ENCODE measurements at regions of chr13 and their contacts with region 1.

Region 1: DNA sequence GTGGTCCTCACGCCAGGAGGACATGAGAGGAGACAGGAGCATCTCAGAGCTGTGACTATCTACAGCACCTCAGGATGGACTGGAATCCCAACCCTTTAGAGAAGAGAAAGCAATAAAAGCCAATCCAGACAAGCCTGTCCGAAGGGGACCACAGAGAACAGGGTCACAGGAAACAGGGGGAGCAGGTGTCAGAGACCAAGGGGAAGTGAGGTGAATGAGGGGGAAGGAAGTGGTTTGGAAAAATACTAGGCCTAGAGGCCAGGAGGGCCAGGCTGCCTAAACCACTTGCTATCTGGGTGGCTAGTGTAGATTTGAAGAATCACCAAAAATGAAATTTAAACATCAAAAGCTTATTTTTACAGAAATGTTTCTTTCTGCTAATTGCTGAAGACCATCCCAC is 16.2 kb downstream of the TMTC4 start:
- DNase-seq: no peak
- ATAC-seq: peak; percentile 54
- H3K4me3 ChIP-seq: no peak overlapping the region
- H3K4me3 Mint-ChIP-seq: peak overlapping the region in 5 of 10 donors; percentile 23 to 54 (median 44)
- H3K27ac ChIP-seq: no peak overlapping the region
- H3K27ac Mint-ChIP-seq: peak overlapping the region in 5 of 9 donors; percentile 17 to 68 (median 40)
- H3K4me1 ChIP-seq: peaks cover 4 to 16% of the 10 kb centered on the region in 2 donors
- H3K4me1 Mint-ChIP-seq: peaks cover 12 to 45% (median 19%) of the 10 kb centered on the region in 7 donors
- H3K27me3 ChIP-seq: no peaks in the 10 kb centered on the region
- H3K27me3 Mint-ChIP-seq: no peaks in the 10 kb centered on the region

Region 2: GRCh38 chr13:99656092-99656745 is 1002.1 kb before region 1 on chr13:
- CTCF ChIA-PET with region 1: no interaction called
- POLR2A ChIA-PET with region 1: no interaction called
- intact Hi-C with region 1: no loop called
- DNase-seq: peak; percentile 58 to 84 (median 80)
- ATAC-seq: peak; percentile 89
- H3K4me3 ChIP-seq: peak overlapping the region; percentile 47
- H3K4me3 Mint-ChIP-seq: peak overlapping the region; percentile 73 to 90 (median 81)
- H3K27ac ChIP-seq: peak overlapping the region; percentile 82
- H3K27ac Mint-ChIP-seq: peak overlapping the region; percentile 47 to 98 (median 92)
- H3K4me1 ChIP-seq: peaks cover 39 to 41% of the 10 kb centered on the region in 2 donors
- H3K4me1 Mint-ChIP-seq: peaks cover 14 to 54% (median 45%) of the 10 kb centered on the region in 7 donors
- H3K27me3 ChIP-seq: no peaks in the 10 kb centered on the region
- H3K27me3 Mint-ChIP-seq: peaks cover 0 to 27% (median 0%) of the 10 kb centered on the region in 5 donors

Region 3: GRCh38 chr13:100644371-100644770 is 14.0 kb before region 1 on chr13:
- CTCF ChIA-PET with region 1: interaction called, 11 read pairs
- POLR2A ChIA-PET with region 1: no interaction called
- intact Hi-C with region 1: no loop called
- DNase-seq: no peak
- ATAC-seq: no peak
- H3K4me3 ChIP-seq: no peak overlapping the region
- H3K4me3 Mint-ChIP-seq: no peak overlapping the region
- H3K27ac ChIP-seq: no peak overlapping the region
- H3K27ac Mint-ChIP-seq: no peak overlapping the region
- H3K4me1 ChIP-seq: no peaks in the 10 kb centered on the region
- H3K4me1 Mint-ChIP-seq: peaks cover 0 to 1% (median 0%) of the 10 kb centered on the region in 7 donors
- H3K27me3 ChIP-seq: no peaks in the 10 kb centered on the region
- H3K27me3 Mint-ChIP-seq: no peaks in the 10 kb centered on the region

Region 4: GRCh38 chr13:100680131-100680530 is 21.8 kb after region 1 on chr13:
- CTCF ChIA-PET with region 1: no interaction called
- POLR2A ChIA-PET with region 1: no interaction called
- intact Hi-C with region 1: no loop called
- DNase-seq: no peak
- ATAC-seq: no peak
- H3K4me3 ChIP-seq: no peak overlapping the region
- H3K4me3 Mint-ChIP-seq: no peak overlapping the region
- H3K27ac ChIP-seq: no peak overlapping the region
- H3K27ac Mint-ChIP-seq: no peak overlapping the region
- H3K4me1 ChIP-seq: no peaks in the 10 kb centered on the region
- H3K4me1 Mint-ChIP-seq: peaks cover 9 to 12% (median 9%) of the 10 kb centered on the region in 7 donors
- H3K27me3 ChIP-seq: no peaks in the 10 kb centered on the region
- H3K27me3 Mint-ChIP-seq: peaks cover 0 to 33% (median 12%) of the 10 kb centered on the region in 5 donors